AG04450 (cell line): ENCODE measurements at regions of chr12 and their contacts with region 1.

Region 1: GRCh38 chr12:48988030-48988649 is 10.0 kb downstream of the WNT1 start:
- DNase-seq: no peak
- H3K4me3 ChIP-seq: no peak overlapping the region
- H3K27ac ChIP-seq: no peak overlapping the region
- H3K27me3 ChIP-seq: peaks cover 61% of the 10 kb centered on the region
- CTCF ChIP-seq: peak; percentile 87

Region 2: DNA sequence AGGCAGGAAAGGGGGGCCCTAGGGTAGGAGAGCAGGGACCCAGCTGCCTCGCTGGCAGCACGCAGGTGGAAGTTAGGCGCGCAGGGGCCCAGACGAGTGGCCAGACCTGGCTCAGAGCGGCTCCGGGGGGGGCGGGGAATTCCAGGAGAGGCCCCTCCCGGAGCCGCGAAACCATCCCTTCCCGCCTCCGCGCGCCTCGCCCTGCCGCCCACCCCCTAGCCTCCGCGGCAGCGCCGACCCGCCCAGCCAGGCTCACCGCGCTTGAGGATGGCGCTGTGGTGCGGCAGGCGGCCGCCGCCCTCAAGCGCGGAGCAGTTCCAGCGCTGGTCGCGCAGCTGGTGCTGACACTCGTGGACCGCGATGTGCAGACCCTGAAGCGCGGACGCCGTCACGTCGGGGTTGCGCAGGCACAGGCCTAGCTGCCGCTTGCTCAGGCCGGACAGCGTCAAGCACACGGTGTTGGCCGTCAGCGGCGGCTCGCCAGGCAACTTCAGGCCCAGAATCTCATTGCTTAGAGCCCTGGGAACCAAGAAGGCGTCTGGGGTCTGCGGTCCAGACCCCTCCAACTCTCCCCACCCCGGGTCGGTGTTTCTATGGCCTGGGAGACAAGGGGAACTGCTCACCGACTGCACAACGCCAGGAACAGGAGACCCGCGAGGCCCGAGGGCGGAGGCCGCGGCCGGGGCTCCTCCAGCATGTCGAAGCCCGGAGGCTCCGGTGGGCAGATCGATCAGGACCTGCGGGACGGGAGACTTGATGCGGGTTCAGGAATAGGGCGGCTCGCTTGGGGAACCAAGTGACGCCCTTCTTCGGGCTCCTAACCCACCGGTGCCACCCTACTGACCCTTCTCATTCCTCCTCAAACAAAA is 18.1 kb before region 1 on chr12:
- CTCF ChIA-PET with region 1: interaction called, 95 read pairs
- POLR2A ChIA-PET with region 1: no interaction called
- DNase-seq: no peak
- H3K4me3 ChIP-seq: no peak overlapping the region; the same call in 1 of the 2 replicates
- H3K27ac ChIP-seq: no peak overlapping the region
- H3K27me3 ChIP-seq: peaks cover 41% of the 10 kb centered on the region
- CTCF ChIP-seq: no peak

Region 3: GRCh38 chr12:48977315-48978281 is 10.5 kb before region 1 on chr12:
- CTCF ChIA-PET with region 1: interaction called, 95 read pairs
- POLR2A ChIA-PET with region 1: no interaction called
- DNase-seq: no peak
- H3K4me3 ChIP-seq: no peak overlapping the region
- H3K27ac ChIP-seq: no peak overlapping the region
- H3K27me3 ChIP-seq: peaks cover 64% of the 10 kb centered on the region
- CTCF ChIP-seq: peak; percentile 63

Region 4: GRCh38 chr12:49000346-49000745 is 12.2 kb after region 1 on chr12:
- CTCF ChIA-PET with region 1: interaction called, 95 read pairs
- POLR2A ChIA-PET with region 1: no interaction called
- DNase-seq: no peak
- H3K4me3 ChIP-seq: no peak overlapping the region
- H3K27ac ChIP-seq: no peak overlapping the region
- H3K27me3 ChIP-seq: peaks cover 12% of the 10 kb centered on the region
- CTCF ChIP-seq: no peak

Region 5: GRCh38 chr12:49388682-49389386 is 400.7 kb after region 1 on chr12:
- CTCF ChIA-PET with region 1: no interaction called
- POLR2A ChIA-PET with region 1: no interaction called
- DNase-seq: no peak
- H3K4me3 ChIP-seq: no peak overlapping the region
- H3K27ac ChIP-seq: no peak overlapping the region
- H3K27me3 ChIP-seq: no peaks in the 10 kb centered on the region
- CTCF ChIP-seq: no peak